CD4-positive, alpha-beta T cell (primary cell): ENCODE measurements at regions of chr9 and their contacts with region 1.

Region 1: DNA sequence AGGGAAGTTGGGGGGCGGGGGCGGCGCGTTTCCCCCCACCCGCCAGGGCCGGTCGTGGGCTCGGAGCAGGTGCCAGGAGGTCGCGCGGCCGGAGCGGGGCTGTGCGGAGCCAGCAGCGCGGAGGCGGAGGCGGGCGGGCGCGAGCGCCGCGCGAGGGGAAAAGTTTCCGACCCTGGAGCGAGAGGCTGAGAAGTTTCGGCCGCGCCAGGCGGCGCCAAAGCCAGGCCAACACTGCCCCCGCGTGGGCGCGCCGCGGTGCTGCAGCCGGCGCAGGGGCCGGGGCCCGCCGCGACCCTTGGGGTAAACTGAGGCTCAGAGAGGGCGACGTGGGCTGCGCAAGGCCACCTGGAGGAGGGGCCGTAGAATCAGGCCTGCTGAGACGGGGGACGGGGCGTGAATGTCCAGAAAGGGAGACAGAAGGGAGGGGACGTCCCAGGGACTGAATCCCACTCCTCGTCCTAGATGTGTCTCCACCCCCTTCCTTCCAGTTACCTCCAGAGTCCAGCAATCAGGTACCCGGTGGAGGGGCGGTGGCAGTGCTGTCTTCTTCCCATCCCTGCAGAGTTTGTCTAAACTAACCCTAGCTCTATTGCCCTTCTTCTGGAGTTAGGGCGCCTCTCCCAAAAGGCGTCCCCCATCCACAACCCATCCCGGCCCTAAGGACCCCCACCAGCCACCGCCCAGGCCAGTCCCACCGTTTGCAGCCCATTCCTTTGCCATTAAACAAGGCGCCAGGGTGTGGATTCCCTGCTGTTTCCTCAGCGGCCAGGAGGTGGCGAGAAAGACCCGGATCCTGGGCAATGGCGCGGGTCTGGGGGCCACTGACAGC is 10.2 kb downstream of the C9orf50 start:
- DNase-seq: peak; percentile 61 to 86 (median 66)
- ATAC-seq: peak; percentile 60
- H3K4me3 ChIP-seq: peak overlapping the region; percentile 51
- H3K4me3 Mint-ChIP-seq: peak overlapping the region; percentile 87
- H3K27ac ChIP-seq: no peak overlapping the region
- H3K27ac Mint-ChIP-seq: peak overlapping the region; percentile 76
- H3K4me1 ChIP-seq: peaks cover 48% of the 10 kb centered on the region
- H3K4me1 Mint-ChIP-seq: peaks cover 43% of the 10 kb centered on the region
- H3K27me3 ChIP-seq: peaks cover 0 to 5% of the 10 kb centered on the region in 2 experiments
- H3K27me3 Mint-ChIP-seq: no peaks in the 10 kb centered on the region
- CTCF ChIP-seq: peak; percentile 88

Region 2: GRCh38 chr9:129131300-129132145 is 479.2 kb before region 1 on chr9:
- CTCF ChIA-PET with region 1: interaction called, 20 read pairs
- POLR2A ChIA-PET with region 1: no interaction called
- intact Hi-C with region 1: loop called in 1 of 2 experiments (anchors 2 kb)
- DNase-seq: peak; percentile 76 to 91 (median 84)
- ATAC-seq: peak; percentile 99
- H3K4me3 ChIP-seq: no peak overlapping the region
- H3K4me3 Mint-ChIP-seq: no peak overlapping the region
- H3K27ac ChIP-seq: peak overlapping the region in 1 of 2 donors; percentile 22
- H3K27ac Mint-ChIP-seq: no peak overlapping the region
- H3K4me1 ChIP-seq: peaks cover 12% of the 10 kb centered on the region
- H3K4me1 Mint-ChIP-seq: peaks cover 7% of the 10 kb centered on the region
- H3K27me3 ChIP-seq: no peaks in the 10 kb centered on the region
- H3K27me3 Mint-ChIP-seq: no peaks in the 10 kb centered on the region
- CTCF ChIP-seq: peak; percentile 99

Region 3: DNA sequence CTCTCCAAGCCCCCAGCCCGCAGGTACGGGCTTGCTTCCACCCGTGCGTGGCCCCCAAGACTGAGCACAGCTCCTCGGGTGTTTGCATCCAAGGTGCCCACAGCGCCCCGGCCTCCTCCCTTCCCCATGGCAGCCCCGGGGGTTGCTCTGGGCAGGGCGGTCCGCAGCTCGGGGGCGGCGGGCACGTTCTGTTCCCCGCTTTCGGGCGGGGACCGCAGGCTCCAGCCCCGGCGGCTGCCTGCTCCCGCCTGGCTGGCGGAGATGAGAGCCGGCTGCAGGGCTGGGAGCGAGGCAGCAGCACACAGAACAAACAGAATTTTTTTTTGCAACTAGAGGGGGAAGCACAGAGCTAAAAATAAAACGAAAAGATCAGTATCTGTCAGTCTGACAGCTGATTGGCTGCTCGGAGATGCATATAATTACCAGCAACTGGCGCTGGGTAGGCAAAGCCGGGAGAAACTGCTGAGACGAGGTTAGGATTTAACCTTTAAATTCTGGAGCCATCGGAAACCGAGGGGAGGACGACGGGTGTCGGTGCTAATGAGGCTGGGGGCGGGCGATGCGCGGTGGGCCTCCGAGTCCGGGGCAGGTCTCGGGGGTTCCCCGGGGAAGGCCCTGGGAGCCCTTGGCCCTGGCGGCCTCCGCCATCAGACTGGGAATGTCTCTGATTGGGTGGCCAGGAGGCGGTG is 290.0 kb before region 1 on chr9:
- CTCF ChIA-PET with region 1: interaction called, 7 read pairs
- POLR2A ChIA-PET with region 1: no interaction called
- intact Hi-C with region 1: loop called (anchors 1 to 2 kb)
- DNase-seq: peak; percentile 16 to 85 (median 42)
- ATAC-seq: peak; percentile 97
- H3K4me3 ChIP-seq: peak overlapping the region; percentile 46
- H3K4me3 Mint-ChIP-seq: peak overlapping the region; percentile 74
- H3K27ac ChIP-seq: peak overlapping the region in 1 of 2 donors; percentile 50
- H3K27ac Mint-ChIP-seq: peak overlapping the region; percentile 67
- H3K4me1 ChIP-seq: peaks cover 24% of the 10 kb centered on the region
- H3K4me1 Mint-ChIP-seq: peaks cover 17% of the 10 kb centered on the region
- H3K27me3 ChIP-seq: no peaks in the 10 kb centered on the region
- H3K27me3 Mint-ChIP-seq: no peaks in the 10 kb centered on the region
- CTCF ChIP-seq: peak; percentile 25

Region 4: DNA sequence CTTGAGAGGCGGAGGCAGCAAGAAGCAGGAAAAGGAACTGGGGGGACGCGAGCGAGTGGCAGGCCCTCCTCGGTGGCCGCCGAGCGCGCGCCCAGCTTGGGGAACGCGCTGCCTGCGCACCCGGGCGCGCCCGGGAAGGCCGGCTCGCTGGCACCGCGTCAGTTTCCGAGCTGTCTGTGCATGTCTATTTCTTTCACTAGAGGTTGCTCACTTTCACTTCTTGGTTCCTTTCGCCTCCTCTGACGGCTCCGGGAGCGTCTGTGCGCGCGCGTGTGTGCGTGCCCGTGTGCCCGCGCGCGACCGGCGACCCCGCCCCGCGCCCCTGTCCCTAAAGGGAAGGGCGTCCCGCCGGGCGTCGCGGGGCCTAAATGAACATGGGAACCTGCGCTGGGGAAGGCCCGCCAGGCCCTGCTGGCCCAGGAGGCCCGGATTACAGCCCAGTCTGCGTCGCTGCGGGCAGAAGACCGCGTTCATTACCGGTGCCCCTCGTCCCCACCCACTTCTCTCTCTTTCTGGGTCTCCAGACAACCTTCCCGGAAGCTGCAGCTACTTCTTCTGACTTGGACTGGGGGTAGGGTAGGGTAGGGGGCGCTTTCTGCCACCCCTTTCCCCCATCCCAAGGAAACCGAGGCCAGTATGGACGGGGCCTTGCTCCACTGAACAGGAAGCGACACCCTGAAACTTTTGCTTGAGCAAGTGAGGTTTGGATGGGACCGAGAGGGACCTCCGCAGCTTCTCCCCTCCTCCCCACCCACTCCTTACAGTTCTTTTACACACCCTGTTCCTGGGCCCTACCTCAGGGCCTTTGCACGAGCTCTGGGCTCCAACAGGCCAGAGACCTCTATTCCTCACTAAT is 226.9 kb before region 1 on chr9:
- CTCF ChIA-PET with region 1: no interaction called
- POLR2A ChIA-PET with region 1: interaction called, 4 read pairs
- intact Hi-C with region 1: loop called (anchors 1 to 10 kb)
- DNase-seq: peak; percentile 54 to 89 (median 73)
- ATAC-seq: peak; percentile 93
- H3K4me3 ChIP-seq: peak overlapping the region; percentile 66
- H3K4me3 Mint-ChIP-seq: peak overlapping the region; percentile 84
- H3K27ac ChIP-seq: peak overlapping the region; percentile 79 to 85
- H3K27ac Mint-ChIP-seq: peak overlapping the region; percentile 83
- H3K4me1 ChIP-seq: peaks cover 21% of the 10 kb centered on the region
- H3K4me1 Mint-ChIP-seq: peaks cover 10% of the 10 kb centered on the region
- H3K27me3 ChIP-seq: no peaks in the 10 kb centered on the region
- H3K27me3 Mint-ChIP-seq: no peaks in the 10 kb centered on the region
- CTCF ChIP-seq: no peak

Region 5: DNA sequence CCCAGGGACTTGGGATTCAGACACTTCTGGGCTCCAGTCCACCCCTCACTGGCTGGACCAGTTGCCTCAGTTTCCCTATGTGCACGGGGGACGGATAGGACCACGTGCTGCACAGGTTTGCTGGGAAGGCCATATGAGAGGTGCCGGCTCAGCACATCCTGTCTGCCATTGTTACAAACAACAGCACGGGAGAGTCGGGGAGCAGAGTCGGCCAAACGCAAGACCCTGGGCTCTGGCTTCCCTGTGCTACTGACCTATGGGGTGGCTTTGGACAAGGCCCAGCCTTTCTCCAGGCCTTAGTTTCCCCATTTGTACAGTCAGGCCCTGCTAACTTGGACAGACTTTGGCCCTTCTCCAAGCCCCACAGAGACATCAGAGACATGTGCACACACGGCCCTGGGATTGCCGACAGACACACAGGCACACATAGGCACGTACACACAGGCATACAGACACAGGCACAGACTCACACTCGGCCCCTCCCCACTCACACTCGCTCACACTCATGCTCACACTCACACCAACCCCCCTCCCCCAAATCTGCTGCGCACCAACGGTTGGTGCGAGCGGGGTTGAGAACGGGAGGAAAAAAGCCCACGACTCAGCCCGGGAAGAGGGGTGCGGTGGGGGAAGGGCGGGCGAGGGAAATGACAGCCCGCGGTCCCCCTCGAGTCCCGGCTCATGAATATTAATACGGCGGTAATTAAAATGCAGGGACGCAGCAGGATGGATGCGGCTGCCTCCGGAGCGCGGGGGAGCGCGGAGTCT is 122.9 kb before region 1 on chr9:
- CTCF ChIA-PET with region 1: interaction called, 3 read pairs
- POLR2A ChIA-PET with region 1: no interaction called
- intact Hi-C with region 1: loop called in 1 of 2 experiments (anchors 5 kb)
- DNase-seq: peak in 13 of 14 experiments; percentile 34 to 79 (median 47)
- ATAC-seq: peak; percentile 13
- H3K4me3 ChIP-seq: peak overlapping the region; percentile 56
- H3K4me3 Mint-ChIP-seq: peak overlapping the region; percentile 83
- H3K27ac ChIP-seq: peak overlapping the region; percentile 77 to 87
- H3K27ac Mint-ChIP-seq: peak overlapping the region; percentile 94
- H3K4me1 ChIP-seq: peaks cover 83% of the 10 kb centered on the region
- H3K4me1 Mint-ChIP-seq: peaks cover 63% of the 10 kb centered on the region
- H3K27me3 ChIP-seq: no peaks in the 10 kb centered on the region
- H3K27me3 Mint-ChIP-seq: peaks cover 5% of the 10 kb centered on the region
- CTCF ChIP-seq: no peak

Region 6: DNA sequence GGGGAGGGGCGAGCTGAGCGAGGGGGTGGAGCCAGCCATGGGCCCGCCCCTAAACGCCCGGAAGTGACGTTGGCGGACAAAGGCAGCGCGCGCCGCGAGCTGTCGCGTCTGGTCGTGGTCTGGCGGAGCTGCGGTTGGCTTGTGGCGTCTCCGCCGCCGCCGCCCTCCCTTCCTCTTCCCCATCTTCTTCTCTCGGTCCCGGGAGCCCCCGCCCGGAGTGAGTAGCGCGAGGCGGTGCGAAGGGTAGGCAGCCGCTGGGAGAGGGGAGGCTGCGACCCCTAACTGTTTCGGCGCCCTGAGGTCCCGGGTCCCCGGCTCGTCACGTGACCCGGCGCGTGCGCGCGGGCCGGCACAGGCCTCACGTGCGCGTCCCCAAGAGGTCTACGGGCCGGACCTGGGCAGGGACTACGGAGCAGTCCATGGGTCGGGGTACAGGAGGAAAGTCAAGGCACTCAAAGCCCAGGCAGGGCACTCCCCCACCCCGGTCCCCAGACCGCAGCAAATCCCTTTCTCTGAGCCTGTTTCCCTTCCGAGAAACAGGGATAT is 15.5 kb after region 1 on chr9 and contains the start of gene NTMT1:
- CTCF ChIA-PET with region 1: interaction called, 23 read pairs
- POLR2A ChIA-PET with region 1: interaction called, 6 read pairs
- intact Hi-C with region 1: loop called in 1 of 2 experiments (anchors 2 kb)
- DNase-seq: peak; percentile 85 to 97 (median 90)
- ATAC-seq: peak; percentile 65
- H3K4me3 ChIP-seq: peak within 1 kb of the TSS; percentile 75
- H3K4me3 Mint-ChIP-seq: peak within 1 kb of the TSS; percentile 94
- H3K27ac ChIP-seq: peak within 1 kb of the TSS; percentile 77 to 98
- H3K27ac Mint-ChIP-seq: peak within 1 kb of the TSS; percentile 94
- H3K4me1 ChIP-seq: peaks cover 70% of the 10 kb centered on the region
- H3K4me1 Mint-ChIP-seq: peaks cover 63% of the 10 kb centered on the region
- H3K27me3 ChIP-seq: peaks cover 6 to 10% of the 10 kb centered on the region in 2 experiments
- H3K27me3 Mint-ChIP-seq: peaks cover 13% of the 10 kb centered on the region
- CTCF ChIP-seq: no peak
- total RNA-seq, gene NTMT1: 50.7 to 52.5 TPM

Region 7: GRCh38 chr9:129783516-129784361 is 173.1 kb after region 1 on chr9:
- CTCF ChIA-PET with region 1: no interaction called
- POLR2A ChIA-PET with region 1: no interaction called
- intact Hi-C with region 1: loop called (anchors 2 to 5 kb)
- DNase-seq: peak; percentile 55 to 84 (median 68)
- ATAC-seq: peak; percentile 100
- H3K4me3 ChIP-seq: no peak overlapping the region
- H3K4me3 Mint-ChIP-seq: no peak overlapping the region
- H3K27ac ChIP-seq: no peak overlapping the region
- H3K27ac Mint-ChIP-seq: no peak overlapping the region
- H3K4me1 ChIP-seq: peaks cover 5% of the 10 kb centered on the region
- H3K4me1 Mint-ChIP-seq: peaks cover 5% of the 10 kb centered on the region
- H3K27me3 ChIP-seq: peaks cover 0 to 2% of the 10 kb centered on the region in 2 experiments
- H3K27me3 Mint-ChIP-seq: peaks cover 8% of the 10 kb centered on the region
- CTCF ChIP-seq: peak; percentile 89